Activated naive CD4-positive, alpha-beta T cell treated with anti-CD3 and anti-CD28 coated beads for 36 hours (primary cell): ENCODE measurements at regions of chr1 and their contacts with region 1.

Region 1: DNA sequence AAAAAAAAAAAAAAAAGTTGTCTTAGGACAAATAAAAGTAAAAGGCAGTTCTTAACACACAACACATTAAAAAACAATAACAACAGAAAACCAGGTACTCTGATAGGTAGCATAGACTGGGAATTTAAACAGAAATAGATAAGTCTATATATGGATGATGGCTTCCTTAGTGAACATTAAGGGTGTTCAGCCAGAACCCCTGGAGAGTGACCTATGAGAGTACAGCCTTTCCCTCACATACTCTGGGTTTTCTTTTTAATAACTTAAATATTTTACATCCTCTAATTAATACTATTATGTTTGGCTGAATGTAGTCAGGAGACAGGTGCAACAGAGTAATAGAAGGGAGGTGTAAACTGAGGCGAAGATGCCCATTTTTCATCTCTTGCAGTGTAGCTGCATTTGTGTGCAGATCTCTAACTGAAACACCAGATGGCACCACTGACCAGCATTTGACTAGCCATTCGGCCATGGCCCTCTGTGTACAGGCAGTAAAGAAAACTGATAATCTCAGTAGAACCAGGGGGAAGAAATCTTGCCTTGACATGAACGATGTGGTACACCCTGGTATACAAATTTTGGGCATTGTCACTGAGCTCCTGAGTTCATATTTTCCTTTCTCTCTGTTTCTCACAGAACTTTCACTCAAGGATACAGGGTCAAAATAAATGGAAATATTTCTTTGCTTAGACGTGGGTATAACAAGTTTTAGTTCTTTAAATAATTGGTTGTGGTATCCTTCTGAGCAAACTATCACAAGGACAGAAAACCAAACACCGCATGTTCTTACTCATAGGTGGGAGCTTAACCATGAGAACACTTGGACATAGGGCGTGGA is 7.6 kb downstream of the TTF2 start:
- DNase-seq: peak; percentile 58
- H3K4me3 Mint-ChIP-seq: no peak overlapping the region
- H3K27ac Mint-ChIP-seq: no peak overlapping the region
- H3K4me1 Mint-ChIP-seq: peaks cover 39% of the 10 kb centered on the region
- H3K27me3 Mint-ChIP-seq: no peaks in the 10 kb centered on the region

Region 2: GRCh38 chr1:117093870-117094621 is 26.3 kb after region 1 on chr1:
- CTCF ChIA-PET with region 1: interaction called, 17 read pairs
- intact Hi-C with region 1: loop called (anchors 1 kb)
- DNase-seq: peak; percentile 68
- H3K4me3 Mint-ChIP-seq: no peak overlapping the region
- H3K27ac Mint-ChIP-seq: no peak overlapping the region
- H3K4me1 Mint-ChIP-seq: peaks cover 20% of the 10 kb centered on the region
- H3K27me3 Mint-ChIP-seq: no peaks in the 10 kb centered on the region

Region 3: DNA sequence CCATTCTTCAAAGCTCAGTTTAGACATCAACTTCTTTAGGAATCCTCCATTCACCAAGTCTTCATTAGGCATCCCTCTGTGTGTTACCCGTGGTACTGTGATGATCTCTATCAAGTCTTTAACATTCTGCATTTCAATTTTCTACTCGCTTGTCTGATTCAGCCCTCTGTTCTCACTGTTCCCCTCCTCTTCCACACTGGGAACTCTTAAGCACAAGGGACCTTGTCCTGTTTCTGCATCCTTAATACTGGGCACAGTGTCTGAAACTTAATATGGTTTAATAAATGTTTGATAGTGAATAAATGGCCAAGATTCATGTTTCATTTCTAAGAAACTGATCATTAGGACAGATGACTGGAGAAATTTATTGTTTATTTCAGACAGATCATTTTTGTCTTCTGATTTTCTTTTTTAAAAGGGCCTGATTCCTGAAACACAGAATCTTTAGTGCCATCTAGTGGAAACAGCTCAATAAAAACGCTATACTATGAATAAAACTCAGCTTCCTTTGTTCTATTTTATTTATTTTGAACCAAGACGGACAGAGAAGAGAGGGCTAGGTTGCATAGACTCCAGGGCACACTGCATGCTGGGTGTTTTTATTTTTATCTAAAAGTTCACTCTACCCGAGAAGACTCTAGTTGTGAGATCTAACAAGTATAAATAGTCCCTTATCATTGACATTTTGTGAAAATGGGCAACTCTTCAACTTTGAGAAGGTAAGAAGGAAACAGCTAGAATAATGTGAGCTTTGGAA is 60.7 kb after region 1 on chr1:
- CTCF ChIA-PET with region 1: interaction called, 16 read pairs
- intact Hi-C with region 1: loop called (anchors 1 kb)
- DNase-seq: no peak
- H3K4me3 Mint-ChIP-seq: no peak overlapping the region
- H3K27ac Mint-ChIP-seq: no peak overlapping the region
- H3K4me1 Mint-ChIP-seq: no peaks in the 10 kb centered on the region
- H3K27me3 Mint-ChIP-seq: peaks cover 6% of the 10 kb centered on the region

Region 4: DNA sequence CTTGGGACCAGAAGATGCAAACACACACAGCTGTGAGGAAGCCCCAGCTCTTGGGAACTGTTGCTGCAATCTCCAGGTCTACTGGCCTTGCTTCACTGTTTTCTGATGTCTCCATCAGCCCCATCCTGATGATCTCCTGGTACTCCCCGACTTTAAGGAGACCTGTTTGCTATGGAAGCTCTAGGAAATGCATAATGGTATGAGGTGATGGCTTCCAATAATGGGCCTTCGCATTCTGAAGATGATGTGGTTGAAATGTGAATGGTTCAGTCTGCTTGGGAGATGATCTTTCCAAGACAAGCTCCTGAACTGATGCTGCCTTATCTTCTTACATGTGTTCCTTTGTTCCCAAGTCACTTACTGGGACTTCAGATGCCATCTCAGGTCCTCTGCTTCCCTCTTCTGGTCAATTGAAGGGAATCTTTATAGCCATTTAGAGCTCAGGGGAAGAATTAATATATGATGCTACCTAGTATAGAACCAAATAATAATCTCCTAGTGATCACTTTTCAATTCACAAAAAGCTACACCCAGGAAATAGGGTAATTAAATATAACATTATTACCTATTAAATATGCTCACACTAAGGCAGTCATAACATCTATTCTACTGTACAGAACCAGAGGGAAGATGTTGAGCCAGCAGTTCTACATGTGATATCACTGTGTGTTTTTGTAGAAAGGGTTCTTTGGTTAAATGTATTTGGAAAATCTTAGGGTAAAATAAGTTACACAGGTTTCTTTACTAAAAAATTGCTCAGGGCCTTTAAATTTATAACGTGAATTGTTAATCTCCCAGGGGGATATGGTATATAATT is 216.9 kb after region 1 on chr1:
- CTCF ChIA-PET with region 1: no interaction called
- intact Hi-C with region 1: loop called (anchors 2 kb)
- DNase-seq: no peak
- H3K4me3 Mint-ChIP-seq: no peak overlapping the region
- H3K27ac Mint-ChIP-seq: no peak overlapping the region
- H3K4me1 Mint-ChIP-seq: no peaks in the 10 kb centered on the region
- H3K27me3 Mint-ChIP-seq: peaks cover 3% of the 10 kb centered on the region